Activated CD4-positive, alpha-beta T cell treated with anti-CD3 and anti-CD28 coated beads for 36 hours (primary cell): ENCODE measurements at regions of chr19 and their contacts with region 1.

Region 1: DNA sequence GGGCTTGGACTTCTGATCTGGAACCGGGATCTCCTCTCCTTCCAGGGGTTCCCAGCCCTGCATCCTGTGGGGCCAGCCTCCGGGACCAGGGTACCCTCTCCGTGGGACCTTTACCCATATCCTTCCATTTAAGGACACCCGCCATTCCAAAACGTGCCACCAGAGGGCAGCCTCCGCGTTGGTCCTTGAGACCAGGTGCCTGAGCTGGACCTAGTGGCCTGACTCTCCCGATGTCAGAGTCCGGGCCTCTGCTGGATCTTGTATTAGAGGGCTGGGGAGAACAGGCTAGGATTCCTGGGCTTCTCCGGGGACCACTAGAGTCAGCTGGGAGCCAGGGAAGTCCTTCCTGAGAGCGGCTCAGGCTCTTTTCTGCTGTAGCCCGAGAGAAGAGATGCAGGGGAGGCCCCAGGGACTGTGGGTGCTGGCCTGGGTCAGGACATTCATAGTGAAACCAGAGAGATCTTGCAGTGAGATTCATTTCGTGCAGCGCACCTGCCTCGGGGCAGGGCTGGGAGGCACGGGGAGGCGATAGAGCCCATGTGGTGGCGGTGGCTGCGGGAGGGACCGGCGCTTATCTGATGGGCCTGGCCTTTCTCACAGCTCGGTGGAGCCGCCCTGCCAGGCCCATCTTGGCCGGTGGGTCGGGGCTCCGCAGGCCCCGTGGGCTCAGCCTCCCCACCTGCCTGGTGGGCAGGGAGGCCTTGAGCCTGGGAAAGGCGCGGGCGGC is 9.8 kb upstream of the SLC7A10 start:
- DNase-seq: peak; percentile 87
- ATAC-seq: peak; percentile 94
- H3K4me3 Mint-ChIP-seq: peak overlapping the region; percentile 30
- H3K27ac Mint-ChIP-seq: no peak overlapping the region
- H3K4me1 Mint-ChIP-seq: peaks cover 7% of the 10 kb centered on the region
- H3K27me3 Mint-ChIP-seq: peaks cover 5% of the 10 kb centered on the region

Region 2: GRCh38 chr19:32674959-32675719 is 560.3 kb before region 1 on chr19 and contains the start of gene ANKRD27:
- CTCF ChIA-PET with region 1: no interaction called
- POLR2A ChIA-PET with region 1: no interaction called
- intact Hi-C with region 1: no loop called
- DNase-seq: peak; percentile 99
- ATAC-seq: peak; percentile 95
- H3K4me3 Mint-ChIP-seq: peak within 1 kb of the TSS; percentile 78
- H3K27ac Mint-ChIP-seq: peak within 1 kb of the TSS; percentile 69
- H3K4me1 Mint-ChIP-seq: peaks cover 30% of the 10 kb centered on the region
- H3K27me3 Mint-ChIP-seq: peaks cover 11% of the 10 kb centered on the region
- total RNA-seq, gene ANKRD27: 36.6 to 37.0 TPM

Region 3: GRCh38 chr19:33125929-33126388 is 109.5 kb before region 1 on chr19:
- CTCF ChIA-PET with region 1: interaction called, 3 read pairs
- POLR2A ChIA-PET with region 1: no interaction called
- intact Hi-C with region 1: loop called in 1 of 2 experiments (anchors 5 kb)
- DNase-seq: peak; percentile 76
- ATAC-seq: peak; percentile 96
- H3K4me3 Mint-ChIP-seq: no peak overlapping the region
- H3K27ac Mint-ChIP-seq: no peak overlapping the region
- H3K4me1 Mint-ChIP-seq: peaks cover 4% of the 10 kb centered on the region
- H3K27me3 Mint-ChIP-seq: no peaks in the 10 kb centered on the region

Region 4: GRCh38 chr19:33280351-33280921 is 45.0 kb after region 1 on chr19:
- CTCF ChIA-PET with region 1: interaction called, 3 read pairs
- POLR2A ChIA-PET with region 1: no interaction called
- intact Hi-C with region 1: loop called in 1 of 2 experiments (anchors 2 kb)
- DNase-seq: peak; percentile 73
- ATAC-seq: peak; percentile 96
- H3K4me3 Mint-ChIP-seq: no peak overlapping the region
- H3K27ac Mint-ChIP-seq: peak overlapping the region; percentile 51
- H3K4me1 Mint-ChIP-seq: peaks cover 12% of the 10 kb centered on the region
- H3K27me3 Mint-ChIP-seq: peaks cover 14% of the 10 kb centered on the region

Region 5: DNA sequence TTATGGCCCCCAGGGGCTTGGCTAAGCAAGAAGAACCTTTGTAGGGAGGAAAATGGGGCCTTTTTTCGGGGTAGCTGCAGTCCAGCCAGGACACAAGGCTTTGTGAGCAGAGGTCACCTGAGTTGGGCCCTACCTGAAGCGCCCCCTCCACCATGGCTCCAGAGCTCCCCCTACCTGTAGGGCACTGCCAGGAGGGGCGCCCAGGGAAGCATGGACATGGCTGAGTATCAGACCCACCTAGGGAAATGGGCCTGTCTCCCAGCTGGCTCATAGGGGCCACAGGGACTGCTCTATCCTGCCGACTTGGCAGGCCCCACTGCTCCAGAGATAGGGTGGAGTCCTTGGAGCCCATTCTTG is 75.9 kb after region 1 on chr19:
- CTCF ChIA-PET with region 1: interaction called, 5 read pairs
- POLR2A ChIA-PET with region 1: no interaction called
- intact Hi-C with region 1: loop called in 1 of 2 experiments (anchors 1 kb)
- DNase-seq: peak; percentile 49
- ATAC-seq: peak; percentile 51
- H3K4me3 Mint-ChIP-seq: no peak overlapping the region
- H3K27ac Mint-ChIP-seq: no peak overlapping the region
- H3K4me1 Mint-ChIP-seq: no peaks in the 10 kb centered on the region
- H3K27me3 Mint-ChIP-seq: peaks cover 3% of the 10 kb centered on the region

Region 6: DNA sequence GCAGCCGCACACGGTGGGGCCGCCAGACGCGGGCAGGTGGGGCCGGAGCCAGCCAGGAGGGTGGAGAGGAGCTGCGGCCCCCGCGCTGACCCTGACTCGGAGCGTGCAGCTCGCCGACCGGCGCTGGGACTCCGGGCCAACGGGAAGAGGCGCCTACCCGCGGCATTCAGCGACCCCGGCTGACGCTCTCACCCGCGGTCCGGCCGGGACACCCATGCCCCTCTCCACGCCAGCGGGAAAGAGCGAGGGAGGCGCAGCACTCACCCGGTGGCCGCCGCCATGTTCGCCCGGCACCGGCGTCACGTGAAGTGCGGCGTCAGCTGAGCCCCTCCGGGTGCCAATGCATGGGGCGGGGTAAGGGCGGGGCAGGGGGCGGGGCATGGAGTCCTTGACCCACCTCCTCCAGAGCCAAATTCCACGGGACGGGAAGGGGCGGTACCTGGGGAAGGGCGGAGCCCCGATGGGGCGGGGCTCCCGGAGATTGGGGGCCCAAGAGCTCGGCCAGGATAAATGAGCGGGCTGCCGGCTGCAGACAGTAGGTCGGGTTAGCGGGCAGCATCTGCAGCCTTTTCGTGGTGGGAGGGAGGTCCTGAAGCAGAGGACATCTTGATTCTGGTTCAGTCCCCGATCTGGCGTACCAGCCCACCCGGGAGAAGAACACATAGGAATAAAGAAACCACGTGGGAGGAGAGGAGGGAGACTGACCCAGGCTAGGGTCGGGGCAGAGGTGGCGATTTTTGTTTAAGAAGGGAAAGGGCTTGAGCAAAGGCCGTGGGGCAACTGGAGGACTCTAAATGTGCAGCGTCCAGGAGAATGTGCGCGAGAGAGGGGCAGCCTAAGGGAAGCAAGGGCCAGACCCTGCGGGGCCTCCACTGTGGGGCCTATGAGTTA is 286.3 kb after region 1 on chr19 and contains the start of gene PEPD:
- CTCF ChIA-PET with region 1: no interaction called
- POLR2A ChIA-PET with region 1: no interaction called
- intact Hi-C with region 1: loop called in 1 of 2 experiments (anchors 5 kb)
- DNase-seq: peak; percentile 95
- ATAC-seq: peak; percentile 97
- H3K4me3 Mint-ChIP-seq: peak within 1 kb of the TSS; percentile 89
- H3K27ac Mint-ChIP-seq: peak within 1 kb of the TSS; percentile 60
- H3K4me1 Mint-ChIP-seq: peaks cover 20% of the 10 kb centered on the region
- H3K27me3 Mint-ChIP-seq: no peaks in the 10 kb centered on the region
- total RNA-seq, gene PEPD: 26.9 to 37.4 TPM